Activated naive CD8-positive, alpha-beta T cell treated with anti-CD3 and anti-CD28 coated beads, Interleukin-2, amount 10 ng/mL, durations not matched to agents 7 days and 5 days (primary cell): ENCODE measurements at regions of chr12 and their contacts with region 1.

Region 1: GRCh38 chr12:57846577-57847319 is at the start of gene CTDSP2:
- DNase-seq: peak; percentile 85
- ATAC-seq: peak; percentile 36
- H3K4me3 Mint-ChIP-seq: peak within 1 kb of the TSS; percentile 89
- H3K27ac Mint-ChIP-seq: peak within 1 kb of the TSS; percentile 75
- H3K4me1 Mint-ChIP-seq: peaks cover 31% of the 10 kb centered on the region
- H3K27me3 Mint-ChIP-seq: peaks cover 14% of the 10 kb centered on the region
- total RNA-seq, gene CTDSP2: 161 TPM

Region 2: GRCh38 chr12:57590536-57591479 is 255.9 kb before region 1 on chr12 and contains the start of gene PIP4K2C:
- POLR2A ChIA-PET with region 1: no interaction called
- DNase-seq: peak; percentile 85
- ATAC-seq: peak; percentile 93
- H3K4me3 Mint-ChIP-seq: peak within 1 kb of the TSS; percentile 89
- H3K27ac Mint-ChIP-seq: peak within 1 kb of the TSS; percentile 82
- H3K4me1 Mint-ChIP-seq: peaks cover 21% of the 10 kb centered on the region
- H3K27me3 Mint-ChIP-seq: peaks cover 2% of the 10 kb centered on the region
- total RNA-seq, gene PIP4K2C: 21.6 to 24.1 TPM

Region 3: DNA sequence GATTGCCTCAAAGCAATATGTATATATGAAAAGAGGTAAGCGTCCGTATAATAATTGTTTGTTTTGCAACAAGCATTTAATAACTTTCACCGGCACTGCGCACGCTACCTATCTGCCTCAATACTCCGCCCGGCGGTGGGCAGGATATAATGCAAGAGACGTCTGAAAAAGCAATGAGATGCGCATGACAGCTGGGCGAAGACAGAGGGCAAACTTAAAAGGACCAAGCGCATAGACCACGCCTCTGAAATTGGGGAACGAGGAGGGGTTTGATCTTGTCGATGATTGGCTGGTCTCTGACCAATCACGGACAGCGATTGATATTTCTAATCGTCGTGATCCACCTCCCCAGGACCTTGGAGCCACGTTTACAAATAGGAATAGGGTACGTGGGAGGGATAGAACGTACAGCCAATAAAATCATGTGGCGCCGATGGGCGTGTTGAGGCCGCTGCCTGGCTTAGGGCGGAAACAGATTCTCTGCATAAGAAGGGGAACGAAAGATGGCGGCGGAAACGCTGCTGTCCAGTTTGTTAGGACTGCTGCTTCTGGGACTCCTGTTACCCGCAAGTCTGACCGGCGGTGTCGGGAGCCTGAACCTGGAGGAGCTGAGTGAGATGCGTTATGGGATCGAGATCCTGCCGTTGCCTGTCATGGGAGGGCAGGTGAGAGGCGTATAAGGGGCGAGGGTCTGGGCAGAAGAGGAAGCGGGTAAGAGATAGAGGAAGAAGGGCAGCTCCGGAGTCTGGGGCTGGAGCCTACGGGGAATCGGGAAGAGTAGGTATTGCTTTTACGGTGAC is 152.9 kb before region 1 on chr12 and contains the start of gene OS9:
- POLR2A ChIA-PET with region 1: no interaction called
- DNase-seq: peak; percentile 84
- ATAC-seq: peak; percentile 99
- H3K4me3 Mint-ChIP-seq: no peak within 1 kb of the TSS
- H3K27ac Mint-ChIP-seq: no peak within 1 kb of the TSS
- H3K4me1 Mint-ChIP-seq: peaks cover 4% of the 10 kb centered on the region
- H3K27me3 Mint-ChIP-seq: peaks cover 16% of the 10 kb centered on the region
- total RNA-seq, gene OS9: 135 to 140 TPM

Region 4: DNA sequence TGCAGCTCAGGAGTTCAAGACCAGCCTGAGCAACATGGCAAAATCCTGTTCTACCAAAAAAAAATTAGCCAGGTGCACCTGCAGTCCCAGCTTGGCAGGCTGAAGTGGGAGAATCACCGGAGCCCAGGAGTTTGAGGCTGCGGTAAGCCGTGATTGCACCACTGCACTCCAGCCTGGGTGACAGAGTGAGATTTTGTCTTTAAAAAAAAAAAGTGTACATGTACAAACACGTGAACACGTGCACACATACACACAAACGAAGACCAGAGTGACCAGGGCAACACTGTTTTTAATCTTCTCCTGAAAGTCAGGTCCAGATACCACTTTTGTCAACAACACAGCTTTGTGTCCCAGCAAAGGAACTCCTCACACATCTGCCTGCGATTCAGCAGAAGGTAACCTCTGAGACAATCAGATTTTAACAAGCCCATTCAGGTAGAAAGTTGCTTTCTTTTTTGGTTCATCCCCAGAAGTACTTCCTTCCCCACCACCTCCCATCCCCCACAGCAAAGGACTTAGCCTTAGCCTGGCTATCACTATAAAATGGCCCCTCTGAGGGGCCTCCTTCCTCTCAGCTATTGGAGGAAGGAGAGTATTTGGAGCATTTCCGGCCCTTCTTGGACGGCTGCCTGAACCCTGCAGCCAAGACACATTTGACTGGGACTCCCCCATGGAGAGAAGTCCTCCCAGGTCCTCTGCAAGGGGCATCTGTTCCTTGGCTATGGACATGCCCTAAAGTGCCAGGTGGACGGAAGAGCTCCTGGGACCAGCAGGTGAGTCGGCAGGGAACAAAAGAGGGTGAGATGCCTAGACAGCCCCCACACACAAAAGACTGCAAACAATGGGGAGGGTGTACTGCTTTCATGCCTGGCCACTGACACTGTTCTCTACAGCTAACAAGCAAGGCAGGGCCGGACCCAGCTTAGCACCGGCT is 10.0 kb before region 1 on chr12:
- POLR2A ChIA-PET with region 1: interaction called, 41 read pairs
- DNase-seq: peak; percentile 50
- ATAC-seq: peak; percentile 60
- H3K4me3 Mint-ChIP-seq: peak overlapping the region; percentile 66
- H3K27ac Mint-ChIP-seq: peak overlapping the region; percentile 93
- H3K4me1 Mint-ChIP-seq: peaks cover 75% of the 10 kb centered on the region
- H3K27me3 Mint-ChIP-seq: no peaks in the 10 kb centered on the region

Region 5: GRCh38 chr12:57896434-57897201 is 49.9 kb after region 1 on chr12:
- POLR2A ChIA-PET with region 1: interaction called, 10 read pairs
- DNase-seq: no peak
- ATAC-seq: no peak
- H3K4me3 Mint-ChIP-seq: peak overlapping the region; percentile 75
- H3K27ac Mint-ChIP-seq: peak overlapping the region; percentile 94
- H3K4me1 Mint-ChIP-seq: peaks cover 33% of the 10 kb centered on the region
- H3K27me3 Mint-ChIP-seq: no peaks in the 10 kb centered on the region